Endothelial cell of umbilical vein (primary cell): ENCODE measurements at regions of chr2 and their contacts with region 1.

Region 1: GRCh38 chr2:231674587-231675338 is 33.6 kb upstream of the PTMA start:
- DNase-seq: peak; percentile 52
- H3K4me3 ChIP-seq: no peak overlapping the region
- H3K27ac ChIP-seq: no peak overlapping the region
- H3K4me1 ChIP-seq: peaks cover 9% of the 10 kb centered on the region
- H3K27me3 ChIP-seq: no peaks in the 10 kb centered on the region
- CTCF ChIP-seq: peak; percentile 76 to 89
- POLR2A ChIP-seq: no peak

Region 2: DNA sequence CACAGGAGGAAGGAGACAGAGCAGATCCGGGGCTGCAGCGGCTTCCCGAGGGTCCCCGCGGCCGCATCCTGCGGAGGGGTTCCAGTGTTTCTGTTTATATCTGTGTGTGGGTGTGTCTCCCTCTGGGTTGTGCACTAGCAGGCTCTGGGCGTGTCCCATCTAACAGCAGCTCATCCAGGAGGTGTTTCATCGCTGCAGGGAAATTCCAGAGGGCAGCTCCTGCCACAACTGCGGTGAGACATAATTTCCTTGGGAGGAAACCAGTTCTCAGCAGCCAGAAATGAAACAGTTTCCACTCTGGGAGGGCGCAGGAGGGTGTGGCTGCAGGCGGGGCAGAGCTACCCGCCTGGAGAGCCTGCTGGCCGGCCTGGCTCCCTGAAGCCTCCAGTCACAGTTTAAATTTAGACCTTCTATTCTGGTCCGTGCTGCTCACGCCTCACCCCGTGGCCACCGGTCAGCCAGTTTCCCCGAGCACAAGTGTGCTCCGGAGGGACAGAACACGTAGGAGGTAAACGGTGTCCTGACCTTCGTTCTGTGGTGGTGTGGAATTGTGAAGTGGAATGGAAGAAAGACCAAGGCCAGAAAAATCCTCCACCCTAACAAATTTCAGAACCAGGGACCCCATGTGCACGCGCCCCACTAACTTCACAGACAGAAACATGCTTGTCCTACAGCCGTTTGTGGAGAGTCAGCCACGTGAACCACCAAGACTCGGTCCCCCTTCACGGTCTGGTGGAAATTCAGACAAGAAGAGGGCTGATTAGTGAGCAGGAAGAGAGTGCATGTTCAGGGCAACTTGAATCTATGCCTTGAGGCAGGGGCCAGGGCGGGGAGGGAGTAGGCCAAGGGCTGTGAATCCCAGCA is 31.9 kb before region 1 on chr2:
- CTCF ChIA-PET with region 1: interaction called, 93 read pairs
- POLR2A ChIA-PET with region 1: no interaction called
- dilution Hi-C with region 1: no loop called
- intact Hi-C with region 1: loop called (anchors 1 kb)
- DNase-seq: peak; percentile 94
- H3K4me3 ChIP-seq: peak overlapping the region in 2 of 3 experiments; percentile 6 to 19
- H3K27ac ChIP-seq: peak overlapping the region; percentile 77
- H3K4me1 ChIP-seq: peaks cover 16% of the 10 kb centered on the region
- H3K27me3 ChIP-seq: no peaks in the 10 kb centered on the region
- CTCF ChIP-seq: no peak
- POLR2A ChIP-seq: no peak

Region 3: DNA sequence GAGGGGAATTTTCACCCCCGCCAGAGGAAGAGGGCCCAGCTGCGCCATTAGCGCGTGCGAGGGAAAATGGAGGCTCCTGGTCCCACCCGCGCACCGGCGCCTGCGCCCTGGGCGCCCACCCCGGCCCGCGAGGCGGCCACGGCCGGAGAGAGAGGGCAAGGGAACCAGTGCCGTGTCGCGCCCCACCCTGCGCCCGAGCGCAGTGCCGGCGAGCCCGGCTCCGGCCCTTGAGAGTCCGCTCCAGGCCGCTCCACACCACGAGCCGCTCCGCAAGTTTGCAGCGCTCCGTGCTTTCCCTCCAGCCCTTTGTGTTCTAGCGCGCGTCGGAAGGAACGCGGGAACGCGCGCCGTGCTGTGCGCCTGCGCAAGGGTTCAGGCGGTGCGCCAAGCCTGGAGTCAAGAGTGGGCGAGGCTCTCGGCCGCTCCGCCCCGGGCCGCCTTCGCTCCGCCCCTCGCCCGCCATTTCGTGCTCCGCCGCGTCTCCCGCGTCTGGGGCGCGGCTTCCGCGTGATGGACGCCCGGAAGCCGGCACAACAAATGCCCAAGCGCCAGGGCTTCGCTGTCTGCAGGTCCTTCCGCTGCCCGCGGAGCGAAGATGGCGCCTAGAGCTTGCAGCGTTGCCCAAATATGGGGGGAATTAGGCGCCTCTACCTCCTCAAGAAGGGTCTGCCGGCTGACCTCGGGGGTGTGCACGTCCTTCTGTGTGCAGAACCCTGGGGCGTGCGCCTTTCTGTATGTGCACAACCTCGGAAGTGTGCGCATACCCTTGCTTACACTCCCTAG is 12.5 kb before region 1 on chr2:
- CTCF ChIA-PET with region 1: interaction called, 25 read pairs
- POLR2A ChIA-PET with region 1: no interaction called
- dilution Hi-C with region 1: no loop called
- intact Hi-C with region 1: no loop called
- DNase-seq: peak; percentile 97
- H3K4me3 ChIP-seq: peak overlapping the region in 2 of 3 experiments; percentile 25 to 32
- H3K27ac ChIP-seq: peak overlapping the region; percentile 57
- H3K4me1 ChIP-seq: peaks cover 23% of the 10 kb centered on the region
- H3K27me3 ChIP-seq: no peaks in the 10 kb centered on the region
- CTCF ChIP-seq: no peak
- POLR2A ChIP-seq: peak; percentile 85

Region 4: DNA sequence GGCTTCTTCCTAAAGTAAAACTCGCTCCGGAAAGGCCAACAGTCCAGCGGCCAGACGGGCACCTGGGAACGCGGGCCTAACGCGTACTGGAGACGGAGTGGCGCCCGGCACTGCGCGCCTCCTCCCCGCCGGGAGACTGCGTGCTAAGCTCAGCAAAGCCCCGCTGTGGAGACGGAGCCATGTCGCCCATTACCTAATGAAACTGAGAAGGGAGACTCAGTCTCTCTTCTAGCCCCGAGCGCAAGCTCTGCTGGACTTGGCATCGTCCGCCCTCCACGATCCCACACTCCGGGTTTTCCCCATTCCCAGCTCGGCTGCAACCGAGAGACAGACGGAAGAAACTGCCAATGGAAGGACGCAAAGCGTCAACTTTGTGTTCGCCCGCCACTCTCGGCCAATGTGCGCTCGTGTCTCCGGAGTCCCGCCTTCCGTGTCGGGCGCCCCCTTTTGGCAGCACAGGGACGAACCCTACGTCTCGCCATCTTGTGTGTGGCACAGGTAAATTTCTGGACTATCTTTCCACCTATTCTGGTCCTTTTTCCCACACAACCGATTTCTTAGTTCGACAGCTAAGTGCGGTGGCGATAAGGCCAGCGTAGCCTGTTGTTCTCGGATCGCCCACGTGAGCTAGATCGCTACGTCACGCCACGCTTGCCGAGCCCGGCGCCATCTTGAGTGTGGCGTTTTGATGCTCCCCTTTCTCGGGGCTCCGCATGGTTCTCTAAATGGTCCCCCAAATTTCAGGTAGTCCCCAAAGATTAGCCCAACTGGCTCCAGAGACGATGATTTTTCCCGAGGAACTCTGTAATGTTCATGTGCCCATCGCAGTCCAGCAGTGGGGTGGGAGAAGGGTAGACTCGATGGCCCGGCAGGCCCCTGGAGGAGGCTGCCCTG is 32.2 kb after region 1 on chr2:
- CTCF ChIA-PET with region 1: interaction called, 583 read pairs
- POLR2A ChIA-PET with region 1: interaction called, 7 read pairs
- dilution Hi-C with region 1: no loop called
- intact Hi-C with region 1: no loop called
- DNase-seq: peak; percentile 98
- H3K4me3 ChIP-seq: peak overlapping the region; percentile 23 to 64 (median 52)
- H3K27ac ChIP-seq: peak overlapping the region; percentile 89
- H3K4me1 ChIP-seq: peaks cover 12% of the 10 kb centered on the region
- H3K27me3 ChIP-seq: no peaks in the 10 kb centered on the region
- CTCF ChIP-seq: peak; percentile 97 to 98
- POLR2A ChIP-seq: peak; percentile 50

Region 5: DNA sequence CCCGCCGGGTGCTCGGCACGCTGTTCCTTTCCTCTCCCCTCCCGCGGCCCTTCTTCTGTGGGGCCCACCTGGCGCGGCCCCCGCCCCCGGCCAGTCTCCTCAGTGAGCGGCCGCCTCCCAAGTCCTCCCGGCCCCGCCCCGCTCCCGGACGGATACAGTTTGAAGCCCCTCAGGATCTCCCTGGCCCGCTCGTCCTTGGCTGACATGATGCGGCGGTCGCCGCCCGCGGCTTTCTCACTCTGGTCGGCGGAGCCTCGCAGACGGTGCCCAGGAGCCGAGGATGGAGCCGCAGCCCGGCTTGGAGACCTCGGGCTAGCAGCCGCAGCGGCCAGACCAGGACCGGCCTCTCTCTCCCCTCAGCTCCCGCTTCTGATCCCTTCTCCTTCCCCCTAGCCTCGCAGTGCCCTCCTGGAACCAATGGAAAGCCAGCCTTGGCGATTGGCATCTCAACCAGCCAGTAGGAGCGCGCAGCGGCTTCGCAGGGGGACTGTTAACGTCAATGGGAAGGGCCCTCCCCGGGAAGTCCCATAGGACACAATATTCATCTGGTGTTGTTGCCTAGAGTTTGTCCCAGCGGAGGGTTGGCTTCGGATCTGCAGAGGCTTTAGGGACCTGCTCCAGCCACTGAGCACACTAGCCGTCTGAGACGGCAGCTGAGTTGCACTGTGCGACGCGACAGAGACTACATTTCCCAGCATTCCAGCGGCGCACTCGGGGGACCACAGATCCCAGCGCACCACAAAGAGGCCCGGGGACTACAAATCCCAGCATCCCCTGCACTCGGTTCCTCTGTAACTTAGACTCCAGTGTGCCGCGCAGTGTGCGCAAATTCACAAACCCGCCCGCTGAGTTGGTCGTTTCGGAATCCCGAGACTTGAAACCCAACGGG is 106.4 kb after region 1 on chr2 and contains the start of gene PDE6D:
- CTCF ChIA-PET with region 1: interaction called, 10 read pairs
- POLR2A ChIA-PET with region 1: no interaction called
- dilution Hi-C with region 1: no loop called
- intact Hi-C with region 1: loop called (anchors 2 kb)
- DNase-seq: peak; percentile 99
- H3K4me3 ChIP-seq: peak within 1 kb of the TSS; percentile 50 to 86 (median 85)
- H3K27ac ChIP-seq: peak within 1 kb of the TSS; percentile 68
- H3K4me1 ChIP-seq: peaks cover 24% of the 10 kb centered on the region
- H3K27me3 ChIP-seq: no peaks in the 10 kb centered on the region
- CTCF ChIP-seq: no peak
- POLR2A ChIP-seq: peak; percentile 67
- total RNA-seq, gene PDE6D: 23.8 and 24.3 TPM in 2 replicates